ENCODE measurements at regions of chr9 and their contacts with region 1.

Region 1: GRCh38 chr9:34637356-34638137 is at the start of gene SIGMAR1:
- DNase-seq: peak; percentile 93
- H3K4me3 Mint-ChIP-seq: peak within 1 kb of the TSS; percentile 92
- H3K27ac Mint-ChIP-seq: peak within 1 kb of the TSS; percentile 97
- H3K4me1 Mint-ChIP-seq: peaks cover 31% of the 10 kb centered on the region
- H3K27me3 Mint-ChIP-seq: no peaks in the 10 kb centered on the region
- CTCF ChIP-seq: no peak
- total RNA-seq, gene SIGMAR1: 82.1 and 99.8 TPM in 2 replicates

Region 2: GRCh38 chr9:34611829-34612630 is 25.5 kb before region 1 on chr9 and contains the start of gene RPP25L:
- CTCF ChIA-PET with region 1: interaction called, 113 read pairs
- POLR2A ChIA-PET with region 1: interaction called, 18 read pairs
- intact Hi-C with region 1: loop called (anchors 1 kb)
- DNase-seq: peak; percentile 83
- H3K4me3 Mint-ChIP-seq: peak within 1 kb of the TSS; percentile 91
- H3K27ac Mint-ChIP-seq: peak within 1 kb of the TSS; percentile 97
- H3K4me1 Mint-ChIP-seq: peaks cover 14% of the 10 kb centered on the region
- H3K27me3 Mint-ChIP-seq: no peaks in the 10 kb centered on the region
- CTCF ChIP-seq: no peak
- total RNA-seq, gene RPP25L: 41.6 and 42.8 TPM in 2 replicates

Region 3: GRCh38 chr9:34620061-34620994 is 17.2 kb before region 1 on chr9 and contains the start of gene DCTN3:
- CTCF ChIA-PET with region 1: interaction called, 113 read pairs
- POLR2A ChIA-PET with region 1: interaction called, 32 read pairs
- intact Hi-C with region 1: no loop called
- DNase-seq: peak; percentile 92
- H3K4me3 Mint-ChIP-seq: peak within 1 kb of the TSS; percentile 76
- H3K27ac Mint-ChIP-seq: peak within 1 kb of the TSS; percentile 74
- H3K4me1 Mint-ChIP-seq: peaks cover 14% of the 10 kb centered on the region
- H3K27me3 Mint-ChIP-seq: no peaks in the 10 kb centered on the region
- CTCF ChIP-seq: no peak
- total RNA-seq, gene DCTN3: 88.5 and 92.4 TPM in 2 replicates

Measured in MCF 10A (cell line).